Activated T-helper 1 cell treated with anti-CD3 and anti-CD28 coated beads, Interleukin-12 subunit alpha, Interleukin-12 subunit beta, Interleukin-2, Interleukin-4 antibody, amounts not matched to agents 30 ng/mL and 10 ng/mL and 1 ng/mL, durations not matched to agents 14 hours and 24 hours and 36 hours (primary cell): ENCODE measurements at regions of chr17 and their contacts with region 1.

Region 1: GRCh38 chr17:77451245-77451893 is 310.6 kb downstream of the SEC14L1 start:
- DNase-seq: peak; percentile 68
- H3K4me3 Mint-ChIP-seq: peak overlapping the region; percentile 95
- H3K27ac Mint-ChIP-seq: peak overlapping the region; percentile 92
- H3K4me1 Mint-ChIP-seq: peaks cover 66% of the 10 kb centered on the region
- H3K27me3 Mint-ChIP-seq: no peaks in the 10 kb centered on the region

Region 2: DNA sequence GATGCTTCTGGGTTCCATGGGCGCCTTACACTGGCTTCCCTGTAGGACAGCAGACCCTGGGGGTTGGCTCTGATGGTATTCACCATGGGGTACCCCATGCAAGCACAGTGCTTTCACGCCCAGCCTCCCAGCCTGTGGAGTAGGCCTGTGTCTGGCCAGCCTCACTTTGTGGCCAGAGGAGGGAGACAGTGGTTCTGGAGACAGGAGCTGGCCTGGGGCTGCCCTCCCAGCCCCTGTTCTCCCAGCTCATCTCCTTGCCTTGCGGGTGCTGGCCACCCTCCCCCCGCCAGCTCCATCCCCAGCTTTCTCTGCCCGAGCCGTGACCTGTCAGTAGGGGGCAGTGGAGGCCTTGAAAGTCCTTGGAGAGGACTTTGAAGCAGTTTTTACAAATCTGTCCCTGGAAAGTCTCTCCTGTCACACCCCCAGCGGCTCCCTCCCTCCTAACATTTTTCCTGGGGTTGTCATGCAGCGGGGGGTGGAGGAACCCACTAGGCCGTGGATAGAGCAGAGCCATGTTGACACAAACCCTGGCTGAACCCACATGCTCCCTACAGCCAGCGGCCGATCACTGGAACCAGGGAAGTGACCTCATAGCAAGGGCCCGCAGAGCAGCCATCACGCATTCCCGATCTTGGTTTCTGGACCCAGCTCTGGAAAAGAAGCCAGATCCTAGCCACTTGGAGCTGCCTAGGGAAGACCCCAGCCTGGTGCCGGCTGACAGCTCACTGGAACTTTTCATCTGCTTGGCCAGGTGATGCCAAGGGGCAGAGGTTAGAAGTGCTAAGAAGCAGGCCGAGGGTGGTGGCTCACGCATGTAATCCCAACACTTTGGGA is 21.2 kb before region 1 on chr17:
- intact Hi-C with region 1: loop called (anchors 2 kb)
- DNase-seq: peak; percentile 66
- H3K4me3 Mint-ChIP-seq: no peak overlapping the region
- H3K27ac Mint-ChIP-seq: peak overlapping the region; percentile 59
- H3K4me1 Mint-ChIP-seq: peaks cover 68% of the 10 kb centered on the region
- H3K27me3 Mint-ChIP-seq: no peaks in the 10 kb centered on the region

Region 3: GRCh38 chr17:77465358-77466041 is 14.1 kb after region 1 on chr17:
- intact Hi-C with region 1: loop called (anchors 1 kb)
- DNase-seq: peak; percentile 72
- H3K4me3 Mint-ChIP-seq: peak overlapping the region; percentile 59
- H3K27ac Mint-ChIP-seq: peak overlapping the region; percentile 89
- H3K4me1 Mint-ChIP-seq: peaks cover 77% of the 10 kb centered on the region
- H3K27me3 Mint-ChIP-seq: no peaks in the 10 kb centered on the region